CD4-positive, alpha-beta T cell (primary cell): ENCODE measurements at regions of chr11 and their contacts with region 1.

Region 1: GRCh38 chr11:118956094-118956846 is at the start of gene UPK2:
- DNase-seq: peak; percentile 82 to 95 (median 87)
- ATAC-seq: peak; percentile 99
- H3K4me3 ChIP-seq: no peak within 1 kb of the TSS
- H3K4me3 Mint-ChIP-seq: no peak within 1 kb of the TSS
- H3K27ac ChIP-seq: no peak within 1 kb of the TSS
- H3K27ac Mint-ChIP-seq: no peak within 1 kb of the TSS
- H3K4me1 ChIP-seq: peaks cover 8% of the 10 kb centered on the region
- H3K4me1 Mint-ChIP-seq: no peaks in the 10 kb centered on the region
- H3K27me3 ChIP-seq: no peaks in the 10 kb centered on the region
- H3K27me3 Mint-ChIP-seq: peaks cover 5% of the 10 kb centered on the region
- CTCF ChIP-seq: peak; percentile 90
- total RNA-seq, gene UPK2: 0.27 TPM in 1 of 2 experiments, not detected in the other

Region 2: GRCh38 chr11:118592616-118593367 is 363.5 kb before region 1 on chr11:
- CTCF ChIA-PET with region 1: interaction called, 5 read pairs
- POLR2A ChIA-PET with region 1: no interaction called
- intact Hi-C with region 1: loop called (anchors 2 kb)
- DNase-seq: no peak
- ATAC-seq: no peak
- H3K4me3 ChIP-seq: no peak overlapping the region
- H3K4me3 Mint-ChIP-seq: no peak overlapping the region
- H3K27ac ChIP-seq: no peak overlapping the region
- H3K27ac Mint-ChIP-seq: no peak overlapping the region
- H3K4me1 ChIP-seq: peaks cover 5% of the 10 kb centered on the region
- H3K4me1 Mint-ChIP-seq: peaks cover 16% of the 10 kb centered on the region
- H3K27me3 ChIP-seq: no peaks in the 10 kb centered on the region
- H3K27me3 Mint-ChIP-seq: no peaks in the 10 kb centered on the region
- CTCF ChIP-seq: no peak

Region 3: DNA sequence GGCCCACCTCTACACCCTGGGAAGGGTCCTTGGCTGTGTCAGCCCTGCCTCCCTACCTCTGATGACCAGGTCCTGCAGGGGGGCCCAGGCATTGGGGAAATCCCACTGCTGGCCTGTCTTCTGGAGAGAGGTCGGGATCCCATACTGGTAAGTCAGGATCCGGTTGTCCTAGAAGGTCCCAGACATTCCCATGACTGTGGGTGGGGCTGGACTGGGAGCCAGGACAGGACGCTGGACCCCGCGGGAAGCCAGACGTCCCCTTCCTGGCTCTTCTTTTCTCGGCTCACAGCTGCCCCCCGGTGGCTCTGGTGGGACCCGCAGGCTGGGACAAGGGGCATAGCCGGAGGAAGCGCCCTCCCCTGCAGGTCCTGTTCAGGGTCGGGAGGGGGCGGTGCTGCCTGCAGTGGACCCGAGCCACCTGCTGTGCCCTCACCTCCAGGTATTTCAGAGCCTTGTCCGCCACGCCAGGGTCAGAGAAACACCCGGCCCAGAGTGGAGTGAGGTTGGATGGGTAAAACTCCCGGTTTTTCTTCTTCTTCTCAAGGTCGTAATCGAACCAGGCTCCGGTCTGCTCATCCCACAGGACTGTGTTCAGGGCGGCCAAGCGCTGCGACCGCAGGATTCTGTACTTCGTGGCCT is 296.8 kb before region 1 on chr11:
- CTCF ChIA-PET with region 1: no interaction called
- POLR2A ChIA-PET with region 1: no interaction called
- intact Hi-C with region 1: loop called (anchors 1 to 5 kb)
- DNase-seq: peak; percentile 80 to 91 (median 88)
- ATAC-seq: peak; percentile 100
- H3K4me3 ChIP-seq: no peak overlapping the region
- H3K4me3 Mint-ChIP-seq: no peak overlapping the region
- H3K27ac ChIP-seq: no peak overlapping the region
- H3K27ac Mint-ChIP-seq: no peak overlapping the region
- H3K4me1 ChIP-seq: peaks cover 10% of the 10 kb centered on the region
- H3K4me1 Mint-ChIP-seq: no peaks in the 10 kb centered on the region
- H3K27me3 ChIP-seq: no peaks in the 10 kb centered on the region
- H3K27me3 Mint-ChIP-seq: no peaks in the 10 kb centered on the region
- CTCF ChIP-seq: peak; percentile 94

Region 4: GRCh38 chr11:118827118-118827517 is 129.2 kb before region 1 on chr11:
- CTCF ChIA-PET with region 1: no interaction called
- POLR2A ChIA-PET with region 1: no interaction called
- intact Hi-C with region 1: no loop called
- DNase-seq: no peak
- ATAC-seq: no peak
- H3K4me3 ChIP-seq: no peak overlapping the region
- H3K4me3 Mint-ChIP-seq: no peak overlapping the region
- H3K27ac ChIP-seq: no peak overlapping the region
- H3K27ac Mint-ChIP-seq: no peak overlapping the region
- H3K4me1 ChIP-seq: no peaks in the 10 kb centered on the region
- H3K4me1 Mint-ChIP-seq: no peaks in the 10 kb centered on the region
- H3K27me3 ChIP-seq: no peaks in the 10 kb centered on the region
- H3K27me3 Mint-ChIP-seq: no peaks in the 10 kb centered on the region
- CTCF ChIP-seq: no peak

Region 5: DNA sequence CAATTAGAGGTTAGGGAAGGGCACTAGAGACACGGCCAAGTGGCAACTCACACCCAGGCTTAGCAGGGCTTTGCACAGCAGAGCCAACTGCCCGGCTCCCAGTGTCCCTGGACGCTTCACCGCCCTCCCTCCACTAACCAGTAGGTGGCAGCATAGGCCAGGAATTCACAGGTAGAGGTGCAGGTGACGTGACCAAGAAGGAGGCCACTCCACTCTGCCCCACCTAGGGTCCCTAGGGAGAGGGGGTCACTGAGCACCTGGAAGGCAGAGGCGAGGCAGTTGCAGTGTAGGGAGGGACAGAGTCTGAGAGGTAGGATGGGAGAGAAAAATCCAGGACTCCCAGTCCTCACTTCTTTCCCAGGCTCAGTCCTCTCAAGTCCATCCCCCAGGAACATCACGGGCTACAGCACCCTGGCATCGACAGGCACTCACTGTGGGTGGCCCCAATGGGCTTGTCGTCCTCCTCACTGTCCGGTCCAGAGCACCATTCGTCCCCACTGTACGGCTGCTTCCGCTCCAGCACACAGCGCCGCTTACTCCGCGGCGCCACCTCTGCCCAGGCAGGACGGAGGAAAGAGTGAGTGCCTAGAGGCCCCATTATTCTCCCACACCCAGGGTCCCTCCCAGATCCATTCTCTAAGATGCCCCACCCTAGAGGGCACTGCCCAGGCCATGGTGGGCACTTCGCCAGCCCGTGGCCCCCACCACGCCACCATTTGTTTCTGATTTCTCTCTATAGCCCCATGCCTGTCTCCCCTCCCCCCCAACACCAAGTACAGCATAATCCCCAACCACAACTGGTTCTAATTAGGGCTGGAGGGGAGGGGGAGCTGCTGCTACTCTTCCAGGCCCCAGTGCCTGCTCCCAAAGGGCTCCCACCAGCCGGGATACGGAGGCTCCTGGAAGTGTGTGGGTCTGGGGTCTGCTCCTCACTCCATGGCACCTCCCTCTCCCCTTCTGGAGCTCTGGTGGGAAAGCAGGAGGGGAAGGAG is 48.9 kb before region 1 on chr11:
- CTCF ChIA-PET with region 1: interaction called, 6 read pairs
- POLR2A ChIA-PET with region 1: interaction called, 3 read pairs
- intact Hi-C with region 1: loop called (anchors 1 kb)
- DNase-seq: peak; percentile 78 to 91 (median 86)
- ATAC-seq: peak; percentile 41
- H3K4me3 ChIP-seq: no peak overlapping the region
- H3K4me3 Mint-ChIP-seq: peak overlapping the region; percentile 77
- H3K27ac ChIP-seq: peak overlapping the region; percentile 22 to 49
- H3K27ac Mint-ChIP-seq: peak overlapping the region; percentile 100
- H3K4me1 ChIP-seq: peaks cover 60% of the 10 kb centered on the region
- H3K4me1 Mint-ChIP-seq: peaks cover 48% of the 10 kb centered on the region
- H3K27me3 ChIP-seq: no peaks in the 10 kb centered on the region
- H3K27me3 Mint-ChIP-seq: no peaks in the 10 kb centered on the region
- CTCF ChIP-seq: peak; percentile 88